PC-9 (cell line): ENCODE measurements at regions of chr17 and their contacts with region 1.

Region 1: GRCh38 chr17:979538-980405 is at the start of gene NXN:
- DNase-seq: peak; percentile 37 to 91
- H3K4me3 ChIP-seq: peak within 1 kb of the TSS; percentile 92
- H3K27ac ChIP-seq: no peak within 1 kb of the TSS
- H3K4me1 ChIP-seq: peaks cover 41% of the 10 kb centered on the region
- H3K27me3 ChIP-seq: no peaks in the 10 kb centered on the region
- CTCF ChIP-seq: no peak
- total RNA-seq, gene NXN: 59.8 and 60.1 TPM in 2 replicates

Region 2: GRCh38 chr17:622356-622755 is 357.4 kb before region 1 on chr17:
- CTCF ChIA-PET with region 1: interaction called, 12 read pairs
- POLR2A ChIA-PET with region 1: no interaction called
- intact Hi-C with region 1: no loop called
- DNase-seq: no peak
- H3K4me3 ChIP-seq: no peak overlapping the region
- H3K27ac ChIP-seq: no peak overlapping the region
- H3K4me1 ChIP-seq: no peaks in the 10 kb centered on the region
- H3K27me3 ChIP-seq: no peaks in the 10 kb centered on the region
- CTCF ChIP-seq: no peak

Region 3: DNA sequence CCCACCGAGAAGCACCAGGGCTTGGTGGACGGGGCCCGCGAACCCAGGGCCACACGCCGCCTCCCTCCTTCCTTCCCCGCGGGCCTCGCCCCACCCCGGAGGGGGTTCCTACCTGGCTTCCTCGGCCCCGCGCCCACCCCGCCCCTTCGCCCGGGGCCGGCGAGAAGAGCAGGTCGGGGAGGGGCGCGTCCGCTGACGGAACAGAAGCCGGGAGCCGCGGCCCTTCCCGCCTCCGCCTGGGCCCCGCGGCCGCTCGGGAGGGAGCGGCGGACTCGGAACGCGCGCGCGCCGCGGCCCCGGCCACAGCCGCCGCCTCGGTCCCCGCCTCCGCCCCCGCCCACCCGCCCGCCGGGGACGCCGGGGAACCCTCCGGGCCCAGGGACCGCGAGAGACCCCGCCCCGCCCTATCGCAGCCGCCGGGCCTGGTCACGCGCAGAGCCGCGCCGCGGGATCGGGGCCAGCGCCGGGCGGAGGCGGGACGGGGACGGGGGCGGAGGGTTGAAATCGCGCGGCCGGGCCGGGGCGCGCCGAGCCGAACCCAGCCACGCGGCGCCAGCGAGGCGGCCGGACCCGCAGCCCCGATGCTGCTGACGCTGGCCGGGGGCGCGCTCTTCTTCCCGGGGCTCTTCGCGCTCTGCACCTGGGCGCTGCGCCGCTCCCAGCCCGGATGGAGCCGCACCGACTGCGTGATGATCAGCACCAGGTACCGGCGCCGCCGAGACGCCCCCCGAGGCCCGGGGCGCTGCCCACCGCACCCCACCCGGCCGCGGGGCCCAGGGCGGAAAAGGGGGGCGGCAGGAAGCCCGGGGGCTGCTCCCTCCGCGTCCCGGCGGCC is 247.5 kb before region 1 on chr17 and contains the start of gene TLCD3A:
- CTCF ChIA-PET with region 1: interaction called, 10 read pairs
- POLR2A ChIA-PET with region 1: no interaction called
- intact Hi-C with region 1: no loop called
- DNase-seq: peak; percentile 42 to 87
- H3K4me3 ChIP-seq: peak within 1 kb of the TSS; percentile 96
- H3K27ac ChIP-seq: no peak within 1 kb of the TSS
- H3K4me1 ChIP-seq: peaks cover 12% of the 10 kb centered on the region
- H3K27me3 ChIP-seq: no peaks in the 10 kb centered on the region
- CTCF ChIP-seq: no peak
- total RNA-seq, gene TLCD3A: 13.4 and 29.4 TPM in 2 replicates

Region 4: GRCh38 chr17:788551-788950 is 191.2 kb before region 1 on chr17:
- CTCF ChIA-PET with region 1: no interaction called
- POLR2A ChIA-PET with region 1: interaction called, 26 read pairs
- intact Hi-C with region 1: loop called (anchors 2 kb)
- DNase-seq: no peak
- H3K4me3 ChIP-seq: no peak overlapping the region
- H3K27ac ChIP-seq: no peak overlapping the region
- H3K4me1 ChIP-seq: peaks cover 6% of the 10 kb centered on the region
- H3K27me3 ChIP-seq: no peaks in the 10 kb centered on the region
- CTCF ChIP-seq: no peak

Region 5: DNA sequence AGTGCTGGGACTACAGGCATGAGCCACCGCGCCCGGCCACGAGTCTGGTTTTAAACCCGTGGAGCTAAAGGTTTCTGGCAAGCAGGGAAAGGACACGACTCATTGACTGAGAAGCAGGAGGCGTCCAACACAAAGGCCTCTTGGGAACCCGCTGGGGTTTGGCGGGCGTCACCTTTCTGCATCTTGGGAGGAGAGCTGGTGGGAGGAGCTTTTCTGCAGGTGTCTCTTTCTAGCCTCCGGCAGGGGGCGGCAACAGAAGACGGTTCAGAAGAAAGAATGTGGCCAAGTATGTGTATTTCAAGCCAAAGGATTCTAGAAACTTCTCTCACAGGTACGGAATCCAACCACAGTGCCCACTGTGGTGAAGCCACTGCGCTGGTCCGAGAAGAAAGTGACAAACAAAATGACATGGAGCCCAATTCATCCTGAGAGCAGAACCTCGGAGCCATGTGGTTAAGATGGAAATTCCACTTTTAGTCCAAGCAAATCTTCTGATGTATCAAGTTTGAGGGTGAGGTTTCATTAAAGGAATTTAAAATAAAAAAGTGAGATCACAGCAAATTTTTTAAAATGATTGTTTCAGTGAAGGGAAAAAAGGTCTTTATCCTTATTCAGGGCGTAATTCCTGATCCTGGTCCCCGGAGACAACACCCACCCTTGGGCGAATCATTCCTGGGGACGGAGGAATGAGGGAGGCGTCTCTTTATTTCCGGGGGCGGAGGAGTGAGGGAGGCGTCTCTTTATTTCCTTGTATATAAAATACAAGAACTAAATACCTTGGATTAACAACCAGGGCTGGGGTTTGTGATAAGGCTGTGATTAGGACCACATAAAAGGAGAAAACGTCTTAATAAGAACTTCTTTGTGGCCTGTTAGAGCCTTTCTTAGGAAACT is 100.0 kb before region 1 on chr17:
- CTCF ChIA-PET with region 1: interaction called, 15 read pairs
- POLR2A ChIA-PET with region 1: interaction called, 8 read pairs
- intact Hi-C with region 1: loop called (anchors 1 kb)
- DNase-seq: peak; percentile 65 to 89
- H3K4me3 ChIP-seq: no peak overlapping the region
- H3K27ac ChIP-seq: no peak overlapping the region
- H3K4me1 ChIP-seq: peaks cover 11% of the 10 kb centered on the region; the same call in 1 of the 2 replicates
- H3K27me3 ChIP-seq: no peaks in the 10 kb centered on the region
- CTCF ChIP-seq: peak; percentile 44

Region 6: DNA sequence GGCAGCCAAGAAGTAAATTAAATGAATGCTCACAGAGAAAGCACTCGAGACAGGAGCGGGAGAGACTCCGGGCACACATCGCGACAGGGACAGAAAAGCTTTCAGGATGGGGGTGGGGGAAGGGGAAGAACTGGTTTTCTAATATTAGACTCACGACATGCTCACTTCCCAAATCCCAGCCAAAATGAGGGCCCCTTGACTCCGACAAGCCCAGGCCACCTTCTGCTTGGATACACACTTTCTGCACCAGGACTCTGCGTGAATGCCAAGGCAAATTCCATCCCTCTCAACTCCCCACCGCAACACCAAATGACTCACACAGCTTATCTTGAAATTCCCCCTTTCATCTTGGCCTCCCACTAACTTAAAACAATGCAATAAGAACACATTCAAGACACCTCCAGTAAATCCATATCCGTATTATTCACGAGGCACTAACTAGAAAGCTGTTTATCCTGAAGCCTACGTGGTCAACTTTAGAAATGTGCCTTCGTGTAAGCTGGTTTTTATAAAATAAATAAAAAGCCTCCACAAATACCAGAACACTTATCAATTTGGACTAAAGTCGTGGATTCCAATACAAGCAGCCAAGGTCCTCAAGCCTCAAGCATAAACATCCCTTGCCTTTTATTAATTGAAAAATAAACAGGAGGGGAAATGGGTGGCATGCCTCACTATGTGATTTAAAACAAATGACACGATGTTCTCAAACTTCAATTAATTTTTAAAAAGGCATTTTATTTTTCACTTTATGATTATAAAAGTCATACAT is 46.3 kb before region 1 on chr17:
- CTCF ChIA-PET with region 1: no interaction called
- POLR2A ChIA-PET with region 1: interaction called, 32 read pairs
- intact Hi-C with region 1: no loop called
- DNase-seq: peak; percentile 91 to 99
- H3K4me3 ChIP-seq: peak overlapping the region; percentile 38; the same call in 1 of the 2 replicates
- H3K27ac ChIP-seq: peak overlapping the region; percentile 91
- H3K4me1 ChIP-seq: peaks cover 49% of the 10 kb centered on the region
- H3K27me3 ChIP-seq: no peaks in the 10 kb centered on the region
- CTCF ChIP-seq: no peak